Lower leg skin (tissue), 4 donors: ENCODE measurements at regions of chr14 and their contacts with region 1.

Region 1: DNA sequence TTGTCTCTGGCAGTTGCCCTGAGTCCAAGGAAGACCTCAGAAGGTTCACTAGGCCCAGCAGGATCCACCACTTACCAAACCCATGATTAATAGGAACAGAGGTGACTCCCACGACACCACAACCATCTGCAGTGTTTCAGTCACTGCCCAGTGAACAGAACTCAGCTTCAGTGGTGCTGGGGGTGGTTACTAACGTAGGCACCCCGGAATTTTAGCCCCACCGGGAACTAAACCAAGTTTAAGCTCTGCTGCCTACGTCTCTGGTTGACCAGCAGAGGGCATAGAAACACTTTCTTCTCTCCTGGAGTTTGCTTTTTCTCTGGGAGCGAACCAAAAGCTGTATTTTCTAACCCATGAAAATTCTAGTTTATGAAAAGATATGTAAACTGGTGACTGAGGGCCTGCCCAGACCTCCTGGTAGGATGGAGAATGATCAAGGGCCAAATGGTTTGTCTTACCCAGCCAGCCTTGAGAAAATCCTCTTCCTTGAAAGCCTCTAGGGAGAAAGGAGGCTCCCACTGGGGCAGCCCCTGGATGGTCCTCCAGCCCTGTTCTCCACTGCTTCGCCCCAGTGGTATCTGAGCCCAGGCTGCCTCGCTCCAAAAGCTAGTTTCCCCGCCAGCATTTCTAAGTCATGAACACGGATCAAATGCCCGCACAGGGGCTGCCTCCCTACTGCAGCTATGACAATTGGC is 379.8 kb downstream of the DPF3 start:
- DNase-seq: peak in 1 of 2 donors; percentile 57
- H3K4me3 ChIP-seq: no peak overlapping the region
- CTCF ChIP-seq: no peak
- POLR2A ChIP-seq: no peak

Region 2: DNA sequence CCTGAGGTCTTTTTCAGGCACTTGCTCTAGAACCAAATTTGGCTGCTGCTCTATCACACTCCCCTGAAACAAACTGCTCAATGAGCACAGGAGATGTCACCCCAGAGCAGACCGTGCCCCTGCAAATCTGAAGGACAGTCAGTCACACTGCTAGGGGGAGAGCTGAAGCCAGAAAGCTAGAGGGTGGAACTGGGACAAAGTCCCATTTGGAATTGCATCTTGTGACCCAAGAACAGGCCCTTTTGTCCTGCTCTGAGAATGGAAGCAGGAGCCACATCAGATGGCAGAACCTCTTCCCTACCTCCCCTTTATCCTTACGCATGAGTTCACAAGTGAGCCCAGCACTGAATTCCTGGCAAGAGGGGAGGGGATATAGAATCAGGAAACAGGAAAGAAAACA is 1769.5 kb before region 1 on chr14:
- intact Hi-C with region 1: no loop called
- DNase-seq: peak in 1 of 2 donors; percentile 23
- H3K4me3 ChIP-seq: no peak overlapping the region
- CTCF ChIP-seq: no peak
- POLR2A ChIP-seq: no peak

Region 3: DNA sequence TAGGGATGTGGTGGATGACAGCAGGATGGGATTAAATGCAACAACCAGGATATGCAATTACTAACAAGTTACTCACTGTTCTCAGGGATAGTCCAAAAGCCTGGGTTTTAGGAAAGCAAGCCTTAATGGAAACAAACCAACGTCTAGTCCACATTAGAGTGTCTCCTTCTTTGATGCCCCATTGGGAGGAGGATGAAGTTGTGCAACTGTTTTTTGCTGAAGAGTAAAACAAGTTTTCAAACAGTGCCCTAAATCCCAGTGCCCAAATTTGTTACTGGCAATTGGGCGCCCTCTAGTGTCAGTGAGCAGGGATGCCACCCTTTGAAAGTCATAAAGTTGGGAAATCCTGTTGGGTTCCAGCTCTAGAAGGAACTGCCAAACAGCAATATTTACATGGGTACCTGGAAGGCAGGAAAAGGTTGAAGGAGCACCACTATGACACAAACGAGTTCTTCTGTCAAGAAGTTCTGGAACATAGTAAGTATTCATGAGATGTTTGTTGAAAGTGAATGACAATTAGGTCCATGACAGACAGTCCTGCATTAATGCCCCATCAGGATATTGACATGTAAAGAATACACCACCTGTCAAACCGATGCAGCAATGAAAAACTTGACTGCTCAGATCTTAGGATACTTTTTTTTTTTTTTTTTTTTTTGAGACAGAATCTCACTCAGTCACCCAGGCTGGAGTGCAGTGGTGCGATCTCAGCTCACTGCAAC is 390.9 kb after region 1 on chr14:
- intact Hi-C with region 1: loop called (anchors 2 kb)
- DNase-seq: no peak
- H3K4me3 ChIP-seq: no peak overlapping the region
- CTCF ChIP-seq: peak in 1 of 3 donors; percentile 53
- POLR2A ChIP-seq: no peak